Posterior vena cava (tissue), 2 donors: ENCODE measurements at regions of chr13 and their contacts with region 1.

Region 1: GRCh38 chr13:56019606-56020005 is 1121.1 kb upstream of the PRR20A start:
- DNase-seq: no peak

Region 2: GRCh38 chr13:55977436-55977835 is 42.2 kb before region 1 on chr13:
- intact Hi-C with region 1: no loop called
- DNase-seq: no peak

Region 3: DNA sequence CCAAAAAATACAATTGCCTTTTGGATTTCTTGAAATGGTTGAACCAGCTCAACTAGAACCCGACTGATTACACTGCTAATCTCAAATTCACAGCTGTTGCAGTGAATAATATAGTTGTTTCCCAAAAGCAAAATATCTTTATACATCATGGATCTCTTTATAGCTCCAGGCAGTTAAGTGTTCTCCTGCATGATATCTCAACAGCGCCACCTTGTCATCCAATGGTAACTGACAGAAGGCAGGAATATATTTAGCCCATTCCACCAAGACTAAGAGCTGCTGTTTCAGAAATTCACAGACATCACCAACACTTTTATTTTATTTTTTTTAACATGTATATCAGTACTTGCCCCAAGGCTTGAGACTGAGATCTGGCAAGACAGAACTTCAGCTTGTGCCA is 19.9 kb before region 1 on chr13:
- intact Hi-C with region 1: loop called in 1 of 2 experiments (anchors 1 kb)
- DNase-seq: no peak